OCI-LY7 (cell line): ENCODE measurements at regions of chr9 and their contacts with region 1.

Region 1: DNA sequence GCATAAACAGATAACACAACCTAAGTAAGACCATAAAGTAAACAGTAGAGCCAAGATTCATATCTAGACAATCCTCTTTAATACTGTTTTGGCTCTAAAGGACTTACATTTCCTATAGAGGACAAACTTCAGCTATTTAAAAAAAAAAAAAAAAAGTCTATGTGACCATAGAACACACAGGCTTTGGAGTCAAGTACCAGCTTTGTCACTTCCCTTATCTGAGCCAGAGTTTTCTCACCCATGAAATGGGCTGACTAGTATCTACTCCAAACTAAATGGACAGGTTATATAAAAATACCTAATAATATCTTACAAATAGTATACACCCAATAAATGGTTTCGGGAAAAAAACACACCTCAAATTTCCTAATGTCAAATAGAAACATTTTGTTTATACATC is 81.3 kb downstream of the STRBP start:
- DNase-seq: peak; percentile 31
- H3K4me3 ChIP-seq: no peak overlapping the region
- H3K27ac ChIP-seq: no peak overlapping the region
- H3K4me1 ChIP-seq: peaks cover 36% of the 10 kb centered on the region
- CTCF ChIP-seq: no peak

Region 2: GRCh38 chr9:123174887-123175518 is 12.1 kb before region 1 on chr9:
- CTCF ChIA-PET with region 1: no interaction called
- POLR2A ChIA-PET with region 1: interaction called, 12 read pairs
- intact Hi-C with region 1: no loop called
- DNase-seq: peak; percentile 93
- H3K4me3 ChIP-seq: peak overlapping the region; percentile 55
- H3K27ac ChIP-seq: peak overlapping the region; percentile 99
- H3K4me1 ChIP-seq: peaks cover 99% of the 10 kb centered on the region
- CTCF ChIP-seq: no peak

Region 3: GRCh38 chr9:123208626-123209174 is 21.6 kb after region 1 on chr9:
- CTCF ChIA-PET with region 1: no interaction called
- POLR2A ChIA-PET with region 1: interaction called, 13 read pairs
- intact Hi-C with region 1: no loop called
- DNase-seq: no peak
- H3K4me3 ChIP-seq: no peak overlapping the region
- H3K27ac ChIP-seq: no peak overlapping the region
- H3K4me1 ChIP-seq: no peaks in the 10 kb centered on the region
- CTCF ChIP-seq: no peak

Region 4: GRCh38 chr9:123399803-123400378 is 212.8 kb after region 1 on chr9:
- CTCF ChIA-PET with region 1: no interaction called
- POLR2A ChIA-PET with region 1: no interaction called
- intact Hi-C with region 1: no loop called
- DNase-seq: peak; percentile 25
- H3K4me3 ChIP-seq: no peak overlapping the region
- H3K27ac ChIP-seq: no peak overlapping the region
- H3K4me1 ChIP-seq: no peaks in the 10 kb centered on the region
- CTCF ChIP-seq: peak; percentile 86